ENCODE measurements at regions of chr4 and their contacts with region 1.

Region 1: GRCh38 chr4:76067652-76068286 is 6.7 kb upstream of the ART3 start:
- DNase-seq: peak; percentile 66
- H3K4me3 Mint-ChIP-seq: no peak overlapping the region
- H3K27ac Mint-ChIP-seq: no peak overlapping the region
- H3K4me1 Mint-ChIP-seq: peaks cover 8% of the 10 kb centered on the region
- H3K27me3 Mint-ChIP-seq: no peaks in the 10 kb centered on the region

Region 2: DNA sequence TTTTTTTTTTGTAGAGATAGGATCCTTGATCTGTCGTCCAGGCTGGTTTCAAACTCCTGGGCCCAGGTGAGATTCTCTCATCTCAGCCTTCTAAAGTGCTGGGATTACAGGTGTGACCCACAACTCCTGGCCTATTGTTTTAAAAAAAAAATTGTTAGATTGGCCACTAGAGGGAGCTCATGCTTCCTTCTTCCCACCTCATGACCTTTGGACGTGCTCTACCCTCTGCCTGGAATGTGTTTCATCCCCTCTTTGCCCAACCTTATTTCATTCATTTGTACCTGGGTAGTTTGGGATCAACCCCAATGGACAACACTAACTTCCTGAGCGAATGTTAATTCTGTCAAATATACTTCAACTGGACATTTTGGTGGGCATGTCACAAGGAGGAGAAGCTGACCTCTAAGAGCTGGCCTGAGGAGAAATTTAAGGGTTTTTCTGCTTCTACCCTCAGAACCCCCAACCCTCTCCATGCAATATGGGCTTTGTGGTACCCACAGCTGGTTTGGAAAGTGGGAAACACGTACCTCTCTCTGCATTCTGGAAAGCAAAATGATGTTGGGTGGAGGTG is 171.9 kb before region 1 on chr4:
- intact Hi-C with region 1: loop called (anchors 1 kb)
- DNase-seq: no peak
- H3K4me3 Mint-ChIP-seq: no peak overlapping the region
- H3K27ac Mint-ChIP-seq: no peak overlapping the region
- H3K4me1 Mint-ChIP-seq: no peaks in the 10 kb centered on the region
- H3K27me3 Mint-ChIP-seq: peaks cover 11% of the 10 kb centered on the region

Region 3: GRCh38 chr4:75916091-75916661 is 151.6 kb before region 1 on chr4:
- intact Hi-C with region 1: loop called (anchors 2 kb)
- DNase-seq: peak; percentile 11
- H3K4me3 Mint-ChIP-seq: no peak overlapping the region
- H3K27ac Mint-ChIP-seq: no peak overlapping the region
- H3K4me1 Mint-ChIP-seq: peaks cover 4% of the 10 kb centered on the region
- H3K27me3 Mint-ChIP-seq: no peaks in the 10 kb centered on the region

Region 4: GRCh38 chr4:76055016-76055415 is 12.8 kb before region 1 on chr4:
- intact Hi-C with region 1: no loop called
- DNase-seq: peak; percentile 9
- H3K4me3 Mint-ChIP-seq: peak overlapping the region; percentile 23
- H3K27ac Mint-ChIP-seq: peak overlapping the region; percentile 52
- H3K4me1 Mint-ChIP-seq: peaks cover 57% of the 10 kb centered on the region
- H3K27me3 Mint-ChIP-seq: no peaks in the 10 kb centered on the region

Region 5: GRCh38 chr4:76108467-76109181 is 40.9 kb after region 1 on chr4:
- intact Hi-C with region 1: no loop called
- DNase-seq: no peak
- H3K4me3 Mint-ChIP-seq: no peak overlapping the region
- H3K27ac Mint-ChIP-seq: no peak overlapping the region
- H3K4me1 Mint-ChIP-seq: no peaks in the 10 kb centered on the region
- H3K27me3 Mint-ChIP-seq: peaks cover 2% of the 10 kb centered on the region

Region 6: GRCh38 chr4:76148142-76148865 is 80.5 kb after region 1 on chr4 and contains the start of gene NUP54:
- intact Hi-C with region 1: loop called (anchors 1 kb)
- DNase-seq: peak; percentile 94
- H3K4me3 Mint-ChIP-seq: peak within 1 kb of the TSS; percentile 99
- H3K27ac Mint-ChIP-seq: peak within 1 kb of the TSS; percentile 97
- H3K4me1 Mint-ChIP-seq: peaks cover 35% of the 10 kb centered on the region
- H3K27me3 Mint-ChIP-seq: no peaks in the 10 kb centered on the region
- total RNA-seq, gene NUP54: 70.6 and 75.1 TPM in 2 replicates

Region 7: DNA sequence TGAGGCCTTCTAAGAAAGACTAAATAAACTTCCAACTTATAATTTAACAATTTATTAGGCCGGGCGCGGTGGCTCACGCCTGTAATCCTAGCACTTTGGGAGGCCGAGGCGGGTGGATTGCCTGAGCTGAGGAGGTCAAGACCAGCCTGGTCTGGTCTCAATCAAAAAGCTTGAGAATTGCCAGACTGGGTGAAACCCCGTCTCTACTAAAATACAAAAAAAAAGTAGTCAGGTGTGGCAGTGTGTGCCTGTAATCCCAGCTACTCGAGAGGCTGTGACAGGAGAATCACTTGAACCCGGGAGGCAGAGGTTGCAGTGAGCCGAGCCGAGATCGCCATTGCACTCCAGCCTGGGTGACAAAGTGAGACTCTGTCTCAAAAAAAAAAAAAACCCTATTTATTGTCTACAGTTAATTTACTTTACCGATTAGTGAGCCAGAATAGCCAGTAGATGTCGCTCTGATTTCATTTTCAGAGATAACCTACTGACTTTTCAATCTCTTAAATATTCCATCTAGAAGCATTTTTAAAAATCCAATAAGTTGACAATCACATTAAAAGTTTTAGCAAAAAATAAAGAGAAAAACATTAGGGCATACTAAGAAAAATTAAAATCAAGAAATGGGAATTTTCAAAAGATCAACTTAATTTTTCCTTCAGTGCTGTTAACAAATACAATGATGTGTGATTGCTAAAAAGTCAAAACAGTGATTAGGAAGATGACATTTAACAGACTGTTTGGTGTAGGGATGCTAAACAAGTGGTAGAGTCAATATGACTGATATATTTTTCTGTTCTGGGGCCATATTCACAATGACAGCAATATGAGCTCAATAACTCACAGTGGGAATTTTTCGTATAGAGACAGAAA is 363.0 kb after region 1 on chr4:
- intact Hi-C with region 1: no loop called
- DNase-seq: no peak
- H3K4me3 Mint-ChIP-seq: no peak overlapping the region
- H3K27ac Mint-ChIP-seq: no peak overlapping the region
- H3K4me1 Mint-ChIP-seq: no peaks in the 10 kb centered on the region
- H3K27me3 Mint-ChIP-seq: peaks cover 23% of the 10 kb centered on the region

Region 8: DNA sequence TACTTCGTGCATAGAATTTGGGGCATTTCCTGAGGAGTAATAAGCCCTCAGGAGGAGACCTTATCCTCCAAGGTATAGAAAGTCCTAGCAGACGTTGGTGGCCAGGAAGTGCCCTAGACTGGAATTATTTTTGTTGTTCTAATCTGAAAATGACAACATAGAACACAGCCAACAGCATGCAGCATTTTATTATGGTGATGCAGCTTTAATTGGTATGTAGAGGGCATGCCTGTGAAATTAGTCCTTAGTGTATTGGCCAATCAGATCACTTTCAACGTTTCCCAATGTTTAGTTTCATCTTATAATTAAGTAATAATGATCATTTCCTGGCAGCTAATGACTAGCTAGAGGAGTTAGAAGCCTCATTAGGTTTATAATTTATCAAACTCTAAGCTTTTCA is 566.5 kb after region 1 on chr4:
- intact Hi-C with region 1: no loop called
- DNase-seq: no peak
- H3K4me3 Mint-ChIP-seq: no peak overlapping the region
- H3K27ac Mint-ChIP-seq: no peak overlapping the region
- H3K4me1 Mint-ChIP-seq: no peaks in the 10 kb centered on the region
- H3K27me3 Mint-ChIP-seq: peaks cover 9% of the 10 kb centered on the region